AG04450 (cell line): ENCODE measurements at regions of chr12 and their contacts with region 1.

Region 1: DNA sequence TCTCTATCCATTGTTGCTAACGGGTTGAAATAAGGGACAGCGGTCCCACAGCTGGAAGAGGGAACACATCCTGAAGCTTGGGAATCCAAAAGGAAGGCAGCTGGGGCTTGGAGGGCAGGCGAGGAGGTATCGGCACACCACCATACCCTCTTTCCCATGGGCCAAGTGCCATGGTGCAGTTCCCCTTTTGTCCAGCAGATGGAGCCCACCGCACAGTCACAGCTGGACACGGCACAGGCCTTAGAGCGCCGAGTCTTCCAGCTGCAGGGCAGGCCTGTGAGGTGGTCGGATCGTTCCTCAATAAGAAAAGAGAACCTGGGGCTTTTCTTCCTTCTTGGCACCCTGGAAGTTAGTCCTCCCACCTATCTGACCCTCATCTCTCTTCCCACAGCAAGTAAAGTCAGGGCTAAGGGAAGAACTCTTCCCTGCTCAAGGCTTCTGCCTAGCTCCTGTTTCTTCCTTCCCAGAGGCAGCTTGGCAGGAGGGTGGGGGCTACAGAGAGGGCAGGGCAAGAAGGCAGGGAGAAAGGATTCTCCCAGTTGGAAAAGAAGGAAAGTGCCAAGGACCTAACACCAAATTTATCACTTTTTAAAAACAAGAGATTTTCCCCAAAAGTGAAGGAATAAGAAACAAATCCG is 8.6 kb downstream of the PPP1R1A start:
- DNase-seq: peak; percentile 26
- H3K4me3 ChIP-seq: no peak overlapping the region
- H3K27ac ChIP-seq: no peak overlapping the region
- H3K27me3 ChIP-seq: peaks cover 4% of the 10 kb centered on the region
- CTCF ChIP-seq: peak; percentile 98

Region 2: GRCh38 chr12:54565310-54565985 is 14.4 kb before region 1 on chr12:
- CTCF ChIA-PET with region 1: interaction called, 15 read pairs
- POLR2A ChIA-PET with region 1: interaction called, 4 read pairs
- DNase-seq: no peak
- H3K4me3 ChIP-seq: no peak overlapping the region
- H3K27ac ChIP-seq: no peak overlapping the region
- H3K27me3 ChIP-seq: peaks cover 26% of the 10 kb centered on the region
- CTCF ChIP-seq: no peak

Region 3: GRCh38 chr12:54596526-54596946 is 16.7 kb after region 1 on chr12:
- CTCF ChIA-PET with region 1: interaction called, 14 read pairs
- POLR2A ChIA-PET with region 1: no interaction called
- DNase-seq: peak; percentile 29
- H3K4me3 ChIP-seq: no peak overlapping the region
- H3K27ac ChIP-seq: no peak overlapping the region
- H3K27me3 ChIP-seq: peaks cover 27% of the 10 kb centered on the region
- CTCF ChIP-seq: peak; percentile 90